Ascending aorta (tissue), 2 donors: ENCODE measurements at regions of chr20 and their contacts with region 1.

Region 1: DNA sequence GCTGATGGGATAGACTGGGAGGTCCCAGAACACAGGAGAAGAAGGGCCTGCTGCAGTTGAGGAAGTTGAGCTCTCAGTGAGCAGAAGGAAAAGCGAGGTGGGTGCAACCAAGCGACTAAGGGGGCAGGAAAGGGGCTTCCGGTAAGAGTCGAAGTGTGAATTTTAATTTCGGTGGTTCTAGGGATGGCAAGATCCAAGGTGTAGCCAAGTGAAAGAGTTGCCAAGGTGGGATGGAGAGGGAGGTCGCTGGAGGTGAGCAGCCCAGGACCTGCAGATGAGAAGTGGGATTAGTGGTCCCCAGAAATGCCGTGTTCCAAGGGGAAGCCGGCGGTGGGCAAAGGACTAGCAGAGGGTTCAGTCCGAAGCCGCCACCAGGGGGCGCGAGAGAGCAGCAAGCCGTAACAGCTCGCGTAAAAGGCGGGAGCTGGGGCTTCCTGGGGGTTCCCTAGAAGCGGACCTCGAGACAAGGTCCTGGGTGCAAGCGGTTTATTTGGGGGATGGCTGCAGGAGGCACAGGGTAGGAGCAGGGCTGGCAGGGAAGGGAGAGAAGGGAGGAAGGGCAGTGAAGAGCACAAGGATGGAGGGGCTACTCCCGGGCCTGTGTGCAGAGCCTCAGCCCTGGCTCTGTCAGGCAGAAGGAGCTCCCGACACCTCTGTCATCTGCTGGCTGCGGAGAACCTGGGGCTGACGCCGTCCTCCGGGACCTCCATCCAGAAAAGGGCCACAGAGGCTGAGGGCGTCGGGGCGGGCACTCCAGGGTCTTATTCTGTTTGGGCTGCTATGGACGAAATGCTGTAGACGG is 103.6 kb downstream of the PAX1 start:
- DNase-seq: no peak
- H3K4me3 ChIP-seq: no peak overlapping the region
- H3K27ac ChIP-seq: no peak overlapping the region
- H3K4me1 ChIP-seq: no peaks in the 10 kb centered on the region
- H3K27me3 ChIP-seq: no peaks in the 10 kb centered on the region
- CTCF ChIP-seq: peak in 2 of 3 experiments; percentile 38 to 53

Region 2: GRCh38 chr20:21682521-21682954 is 126.5 kb before region 1 on chr20:
- intact Hi-C with region 1: no loop called
- DNase-seq: no peak
- H3K4me3 ChIP-seq: no peak overlapping the region
- H3K27ac ChIP-seq: no peak overlapping the region
- H3K4me1 ChIP-seq: no peaks in the 10 kb centered on the region
- H3K27me3 ChIP-seq: no peaks in the 10 kb centered on the region
- CTCF ChIP-seq: no peak

Region 3: GRCh38 chr20:21755966-21756365 is 53.1 kb before region 1 on chr20:
- intact Hi-C with region 1: loop called (anchors 10 kb)
- DNase-seq: no peak
- H3K4me3 ChIP-seq: no peak overlapping the region
- H3K27ac ChIP-seq: no peak overlapping the region
- H3K4me1 ChIP-seq: no peaks in the 10 kb centered on the region
- H3K27me3 ChIP-seq: no peaks in the 10 kb centered on the region
- CTCF ChIP-seq: no peak

Region 4: GRCh38 chr20:22106308-22106938 is 297.4 kb after region 1 on chr20:
- intact Hi-C with region 1: loop called (anchors 5 kb)
- DNase-seq: no peak
- H3K4me3 ChIP-seq: no peak overlapping the region
- H3K27ac ChIP-seq: no peak overlapping the region
- H3K4me1 ChIP-seq: no peaks in the 10 kb centered on the region
- H3K27me3 ChIP-seq: no peaks in the 10 kb centered on the region
- CTCF ChIP-seq: peak; percentile 18 to 47 (median 19)